Activated T-helper 1 cell treated with anti-CD3 and anti-CD28 coated beads, Interleukin-12 subunit alpha, Interleukin-12 subunit beta, Interleukin-2, Interleukin-4 antibody, amounts not matched to agents 30 ng/mL and 10 ng/mL and 1 ng/mL, durations not matched to agents 14 hours and 24 hours and 36 hours (primary cell): ENCODE measurements at regions of chr11 and their contacts with region 1.

Region 1: DNA sequence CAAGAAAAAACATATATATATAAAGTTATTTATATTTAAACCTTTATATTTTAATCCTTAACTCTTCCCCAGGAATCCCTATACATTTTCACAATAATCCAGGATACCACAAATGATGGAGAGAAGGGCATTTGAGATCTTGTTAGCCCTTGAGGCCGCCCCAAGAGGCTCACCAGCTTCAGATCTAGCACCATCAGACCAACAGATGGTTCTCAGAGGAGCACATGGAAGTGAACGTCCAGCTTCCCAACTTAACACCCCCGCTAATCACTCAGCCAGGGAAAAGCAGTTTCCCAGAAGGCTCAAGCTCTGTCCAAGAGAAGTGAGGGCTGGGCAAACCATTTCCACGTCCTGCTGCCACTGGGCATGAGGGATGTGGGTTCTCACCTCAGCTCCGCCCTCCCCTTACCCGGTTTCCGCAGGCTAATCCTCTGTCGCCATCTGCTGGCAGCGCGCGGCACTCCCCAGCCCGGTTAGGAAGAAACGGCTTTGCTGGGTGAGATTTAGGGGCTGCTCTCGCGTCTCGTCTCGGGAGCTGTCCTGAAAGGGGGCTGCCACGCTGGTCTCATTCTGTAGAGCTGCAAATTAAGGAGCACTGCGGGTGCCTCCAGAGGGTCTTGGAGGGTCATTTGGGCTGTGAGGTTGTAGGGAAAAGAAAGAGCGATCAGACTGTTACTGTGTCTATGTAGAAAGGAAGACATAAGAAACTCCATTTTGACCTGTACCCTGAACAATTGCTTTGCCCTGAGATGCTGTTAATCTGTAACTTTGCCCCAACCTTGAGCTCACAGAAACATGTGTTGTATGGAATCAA is 6.8 kb upstream of the FAM111A start:
- DNase-seq: peak; percentile 82
- H3K4me3 Mint-ChIP-seq: peak overlapping the region; percentile 60
- H3K27ac Mint-ChIP-seq: no peak overlapping the region
- H3K4me1 Mint-ChIP-seq: peaks cover 14% of the 10 kb centered on the region
- H3K27me3 Mint-ChIP-seq: no peaks in the 10 kb centered on the region

Region 2: GRCh38 chr11:58958500-58958899 is 177.4 kb before region 1 on chr11:
- intact Hi-C with region 1: loop called (anchors 1 kb)
- DNase-seq: no peak
- H3K4me3 Mint-ChIP-seq: no peak overlapping the region
- H3K27ac Mint-ChIP-seq: no peak overlapping the region
- H3K4me1 Mint-ChIP-seq: peaks cover 5% of the 10 kb centered on the region
- H3K27me3 Mint-ChIP-seq: peaks cover 3% of the 10 kb centered on the region

Region 3: DNA sequence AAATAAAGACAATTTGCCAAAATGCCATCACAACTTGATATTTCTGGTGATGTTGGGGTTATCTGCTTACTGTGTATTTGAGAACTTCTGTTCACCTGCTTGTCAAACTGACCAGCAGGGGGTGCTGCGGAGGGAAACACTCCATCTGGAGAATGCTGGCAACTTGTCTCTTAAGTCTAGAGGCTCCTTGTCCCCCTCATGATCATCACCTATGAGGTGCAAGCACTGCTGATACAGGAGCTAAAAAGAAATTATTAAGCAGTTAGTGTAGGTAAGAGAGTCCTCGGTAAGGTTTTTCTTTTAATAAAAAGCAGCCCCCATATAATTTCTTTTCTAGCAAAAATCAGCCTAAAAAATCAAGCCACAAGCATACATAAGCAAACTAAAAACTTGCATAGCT is 82.5 kb before region 1 on chr11:
- intact Hi-C with region 1: loop called (anchors 1 kb)
- DNase-seq: peak; percentile 58
- H3K4me3 Mint-ChIP-seq: no peak overlapping the region
- H3K27ac Mint-ChIP-seq: no peak overlapping the region
- H3K4me1 Mint-ChIP-seq: peaks cover 8% of the 10 kb centered on the region
- H3K27me3 Mint-ChIP-seq: peaks cover 31% of the 10 kb centered on the region

Region 4: DNA sequence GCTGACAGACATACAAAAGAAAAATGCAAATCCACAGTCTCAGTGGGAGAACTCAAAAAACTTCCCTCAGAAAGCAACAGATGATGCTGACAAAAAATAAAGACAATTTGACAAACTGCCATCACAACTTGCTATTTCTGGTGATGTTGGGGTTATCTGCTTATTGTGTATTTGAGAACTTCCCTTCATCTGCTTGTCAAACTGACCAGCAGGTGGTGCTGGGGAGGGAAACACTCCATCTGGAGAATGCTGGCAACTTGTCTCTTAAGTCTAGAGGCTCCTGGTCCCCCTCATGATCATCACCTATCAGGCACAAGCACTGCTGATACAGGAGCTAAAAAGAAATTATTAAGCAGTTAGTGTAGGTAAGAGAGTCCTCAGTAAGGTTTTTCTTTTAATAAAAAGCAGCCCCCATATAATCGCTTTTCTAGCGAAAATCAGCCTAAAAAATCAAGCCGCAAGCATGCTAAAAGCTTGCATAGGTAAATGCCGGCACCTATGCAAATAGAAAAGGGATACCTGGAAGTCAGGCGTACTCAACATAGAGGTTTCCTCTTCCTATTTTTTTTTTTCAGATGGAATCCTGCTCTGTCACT is 38.6 kb before region 1 on chr11:
- intact Hi-C with region 1: loop called (anchors 1 kb)
- DNase-seq: peak; percentile 52
- H3K4me3 Mint-ChIP-seq: no peak overlapping the region
- H3K27ac Mint-ChIP-seq: no peak overlapping the region
- H3K4me1 Mint-ChIP-seq: peaks cover 18% of the 10 kb centered on the region
- H3K27me3 Mint-ChIP-seq: peaks cover 29% of the 10 kb centered on the region

Region 5: GRCh38 chr11:59106363-59107336 is 29.2 kb before region 1 on chr11 and contains the start of gene FAM111B:
- intact Hi-C with region 1: loop called (anchors 1 kb)
- DNase-seq: peak; percentile 73
- H3K4me3 Mint-ChIP-seq: peak within 1 kb of the TSS; percentile 93
- H3K27ac Mint-ChIP-seq: peak within 1 kb of the TSS; percentile 82
- H3K4me1 Mint-ChIP-seq: peaks cover 80% of the 10 kb centered on the region
- H3K27me3 Mint-ChIP-seq: no peaks in the 10 kb centered on the region
- total RNA-seq, gene FAM111B: 54.9 and 57.3 TPM in 2 replicates